MCF 10A (cell line): ENCODE measurements at regions of chr1 and their contacts with region 1.

Region 1: DNA sequence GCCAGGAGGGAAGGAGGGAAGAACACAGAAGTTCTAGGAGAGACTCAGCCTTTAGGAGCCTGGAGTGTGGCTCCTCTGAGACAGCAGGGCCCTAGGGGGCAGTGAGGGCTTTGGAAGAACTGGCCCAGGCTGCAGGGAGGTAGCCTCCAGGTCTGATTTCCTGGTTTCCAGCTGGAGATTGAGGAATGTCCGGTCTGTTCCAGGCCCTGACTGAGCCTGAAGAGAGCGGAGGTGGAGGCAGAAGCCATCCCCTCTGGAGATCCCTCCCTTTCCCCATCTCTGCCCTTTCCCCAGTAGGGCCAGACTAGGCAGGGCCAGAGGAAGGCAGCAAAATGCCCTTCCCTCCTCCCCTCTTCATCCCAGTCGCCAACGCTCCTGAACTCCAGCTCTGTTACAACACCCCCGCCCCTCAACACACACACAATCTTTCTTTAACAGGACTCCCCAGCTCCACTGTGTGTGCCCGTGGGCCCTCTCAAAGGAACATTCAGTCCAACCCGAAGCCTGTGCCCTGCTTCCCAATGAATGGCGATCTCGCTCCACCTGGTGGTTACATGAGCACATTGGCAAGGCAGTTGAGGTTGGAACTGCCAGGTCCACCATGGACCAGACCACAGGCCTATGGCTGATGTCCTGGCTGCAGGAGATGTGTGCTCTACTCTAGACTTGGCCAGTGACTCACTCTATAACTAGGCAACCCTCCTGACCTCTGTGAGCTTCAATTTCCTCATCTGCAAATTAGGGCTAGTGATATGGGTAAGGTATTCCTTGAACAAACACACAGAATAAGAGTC is 32.0 kb downstream of the MAP7D1 start:
- DNase-seq: peak; percentile 91
- H3K4me3 Mint-ChIP-seq: no peak overlapping the region
- H3K27ac Mint-ChIP-seq: peak overlapping the region; percentile 43
- H3K4me1 Mint-ChIP-seq: peaks cover 15% of the 10 kb centered on the region
- H3K27me3 Mint-ChIP-seq: no peaks in the 10 kb centered on the region
- CTCF ChIP-seq: peak; percentile 85

Region 2: DNA sequence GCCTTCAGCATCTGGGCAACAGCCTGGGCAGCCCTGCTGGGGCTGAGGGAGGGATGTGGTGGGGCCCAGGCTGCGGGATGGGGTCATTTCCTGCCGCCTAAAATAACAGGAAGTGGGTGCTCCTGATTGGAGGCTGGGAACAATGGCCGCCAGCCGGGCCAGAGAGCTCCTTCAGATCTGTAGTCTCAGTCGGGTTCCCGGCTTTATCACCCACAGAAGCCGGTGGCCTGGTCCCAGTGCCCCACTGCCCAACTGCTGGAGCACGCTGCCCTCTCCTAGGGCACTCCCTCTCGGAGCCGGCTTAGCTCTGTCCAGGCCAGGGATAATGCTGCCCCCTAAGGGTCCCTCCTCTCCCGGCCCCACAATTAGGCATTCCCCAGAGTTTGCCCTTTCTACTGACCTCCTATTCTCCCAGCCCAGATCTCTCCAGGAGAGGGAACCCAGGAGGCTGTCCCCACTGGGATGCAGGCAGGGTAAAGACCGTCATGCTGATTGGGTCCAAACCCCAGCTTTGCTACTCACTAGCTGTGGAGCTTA is 27.0 kb before region 1 on chr1:
- CTCF ChIA-PET with region 1: interaction called, 83 read pairs
- POLR2A ChIA-PET with region 1: interaction called, 25 read pairs
- intact Hi-C with region 1: loop called (anchors 1 kb)
- DNase-seq: peak; percentile 59
- H3K4me3 Mint-ChIP-seq: peak overlapping the region; percentile 66
- H3K27ac Mint-ChIP-seq: peak overlapping the region; percentile 94
- H3K4me1 Mint-ChIP-seq: peaks cover 61% of the 10 kb centered on the region
- H3K27me3 Mint-ChIP-seq: no peaks in the 10 kb centered on the region
- CTCF ChIP-seq: peak; percentile 40

Region 3: GRCh38 chr1:36172983-36173382 is 15.0 kb before region 1 on chr1:
- CTCF ChIA-PET with region 1: interaction called, 38 read pairs
- POLR2A ChIA-PET with region 1: interaction called, 3 read pairs
- intact Hi-C with region 1: no loop called
- DNase-seq: peak; percentile 89
- H3K4me3 Mint-ChIP-seq: no peak overlapping the region
- H3K27ac Mint-ChIP-seq: peak overlapping the region; percentile 94
- H3K4me1 Mint-ChIP-seq: peaks cover 26% of the 10 kb centered on the region
- H3K27me3 Mint-ChIP-seq: no peaks in the 10 kb centered on the region
- CTCF ChIP-seq: no peak

Region 4: GRCh38 chr1:36203554-36204346 is 15.8 kb after region 1 on chr1:
- CTCF ChIA-PET with region 1: interaction called, 21 read pairs
- POLR2A ChIA-PET with region 1: interaction called, 5 read pairs
- intact Hi-C with region 1: no loop called
- DNase-seq: peak; percentile 75
- H3K4me3 Mint-ChIP-seq: peak overlapping the region; percentile 52
- H3K27ac Mint-ChIP-seq: peak overlapping the region; percentile 97
- H3K4me1 Mint-ChIP-seq: peaks cover 30% of the 10 kb centered on the region
- H3K27me3 Mint-ChIP-seq: no peaks in the 10 kb centered on the region
- CTCF ChIP-seq: no peak

Region 5: GRCh38 chr1:36217670-36218069 is 29.7 kb after region 1 on chr1:
- CTCF ChIA-PET with region 1: interaction called, 28 read pairs
- POLR2A ChIA-PET with region 1: no interaction called
- intact Hi-C with region 1: no loop called
- DNase-seq: peak; percentile 50
- H3K4me3 Mint-ChIP-seq: no peak overlapping the region
- H3K27ac Mint-ChIP-seq: no peak overlapping the region
- H3K4me1 Mint-ChIP-seq: peaks cover 22% of the 10 kb centered on the region
- H3K27me3 Mint-ChIP-seq: no peaks in the 10 kb centered on the region
- CTCF ChIP-seq: peak; percentile 12

Region 6: DNA sequence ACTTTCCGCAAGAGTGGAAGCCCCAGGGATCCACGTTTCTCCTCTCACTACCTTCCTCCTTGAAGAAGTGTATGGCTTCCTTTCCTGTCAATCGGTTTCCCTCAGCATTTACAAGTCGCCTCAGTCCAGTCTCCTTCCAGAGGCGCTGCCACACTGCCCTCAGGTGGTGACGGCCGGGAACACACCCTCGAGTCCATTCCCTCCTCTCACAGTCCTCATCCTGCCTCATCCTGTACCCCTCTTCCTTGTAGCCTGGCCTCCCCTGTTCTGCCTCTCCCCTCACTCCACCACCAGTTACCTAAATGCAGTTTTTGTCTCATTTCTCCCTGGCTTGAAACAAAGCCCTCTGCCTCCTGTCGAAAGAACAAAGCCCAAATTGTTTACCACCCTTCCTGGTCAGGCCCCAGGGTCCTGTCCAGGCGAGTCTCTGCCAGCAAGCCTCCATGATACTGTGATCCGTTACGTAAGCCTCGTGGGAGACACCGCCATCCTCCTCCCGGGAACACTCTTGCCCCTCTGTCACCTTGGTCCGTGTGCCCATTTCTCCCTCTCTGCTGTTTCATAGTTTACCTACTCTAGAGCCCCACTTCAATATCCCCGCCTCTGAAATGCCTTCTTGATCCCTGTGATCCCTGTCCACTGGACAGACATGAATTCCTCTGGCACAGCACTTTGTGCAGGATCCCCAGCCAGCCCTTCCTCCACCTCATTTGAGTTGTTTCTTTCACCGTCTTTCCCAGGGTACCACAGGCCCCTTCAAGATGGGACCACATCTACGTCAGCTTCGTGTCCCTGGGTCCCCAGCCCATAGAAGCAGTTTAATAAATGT is 233.1 kb after region 1 on chr1:
- CTCF ChIA-PET with region 1: interaction called, 4 read pairs
- POLR2A ChIA-PET with region 1: no interaction called
- intact Hi-C with region 1: loop called (anchors 1 kb)
- DNase-seq: peak; percentile 83
- H3K4me3 Mint-ChIP-seq: no peak overlapping the region
- H3K27ac Mint-ChIP-seq: peak overlapping the region; percentile 76
- H3K4me1 Mint-ChIP-seq: peaks cover 14% of the 10 kb centered on the region
- H3K27me3 Mint-ChIP-seq: no peaks in the 10 kb centered on the region
- CTCF ChIP-seq: peak; percentile 96